Transverse colon (tissue), 4 donors: ENCODE measurements at regions of chr12 and their contacts with region 1.

Region 1: GRCh38 chr12:111396726-111397445 is 8.8 kb upstream of the SH2B3 start:
- DNase-seq: peak; percentile 90
- H3K4me3 ChIP-seq: peak overlapping the region in 1 of 4 donors; percentile 24
- H3K27ac ChIP-seq: peak overlapping the region; percentile 2 to 50 (median 8)
- H3K4me1 ChIP-seq: peaks cover 0 to 12% (median 4%) of the 10 kb centered on the region in 4 donors
- H3K27me3 ChIP-seq: no peaks in the 10 kb centered on the region
- CTCF ChIP-seq: peak; percentile 98 to 100 (median 99)
- EP300 ChIP-seq: no peak
- POLR2A ChIP-seq: no peak

Region 2: DNA sequence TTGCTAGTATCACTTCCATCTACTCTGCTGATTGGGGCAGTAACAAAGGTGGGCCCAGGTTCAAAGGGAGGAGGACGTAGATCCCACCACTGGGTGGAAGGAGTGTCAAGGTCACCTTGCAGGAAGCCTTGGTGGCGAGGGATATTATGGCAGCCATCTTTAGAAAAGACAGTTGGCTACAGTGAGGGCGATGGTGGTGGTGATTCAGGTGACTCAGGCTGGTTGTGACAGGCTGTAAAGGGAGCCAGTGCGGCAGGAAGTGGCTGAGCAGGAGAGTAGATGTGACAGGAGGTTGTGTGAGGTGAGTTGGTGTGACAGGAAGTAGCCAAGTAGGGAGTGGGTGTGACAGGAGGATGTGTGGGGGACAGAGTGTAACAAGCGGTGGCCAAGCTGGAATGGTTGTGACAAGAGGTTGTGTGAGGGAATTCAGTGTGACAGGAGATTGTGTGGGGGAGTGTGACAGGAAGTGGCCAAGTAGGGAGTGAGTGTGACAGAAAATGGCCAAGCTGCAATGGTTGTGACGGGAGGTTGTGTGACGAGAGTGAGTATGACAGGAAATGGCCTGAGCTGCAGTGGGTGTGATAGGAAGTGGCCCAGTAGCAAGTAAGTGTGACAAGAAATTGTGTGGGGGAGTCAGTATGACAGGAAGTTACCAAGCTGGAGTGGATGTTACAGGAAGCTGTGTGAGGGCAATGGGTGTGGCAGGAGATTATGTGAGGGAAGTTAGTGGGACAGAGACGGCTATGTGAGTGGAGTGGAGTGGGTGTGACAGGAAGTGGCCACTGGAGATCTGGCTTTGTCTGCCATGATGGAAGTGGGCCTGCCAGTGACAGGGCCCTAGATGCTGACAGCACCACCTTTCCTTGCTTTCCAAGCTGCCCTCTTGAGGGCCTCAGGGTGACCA is 340.0 kb before region 1 on chr12:
- in situ Hi-C with region 1: no loop called
- intact Hi-C with region 1: no loop called
- DNase-seq: peak; percentile 22
- H3K4me3 ChIP-seq: no peak overlapping the region
- H3K27ac ChIP-seq: no peak overlapping the region
- H3K4me1 ChIP-seq: no peaks in the 10 kb centered on the region
- H3K27me3 ChIP-seq: no peaks in the 10 kb centered on the region
- CTCF ChIP-seq: no peak
- EP300 ChIP-seq: no peak
- POLR2A ChIP-seq: no peak

Region 3: DNA sequence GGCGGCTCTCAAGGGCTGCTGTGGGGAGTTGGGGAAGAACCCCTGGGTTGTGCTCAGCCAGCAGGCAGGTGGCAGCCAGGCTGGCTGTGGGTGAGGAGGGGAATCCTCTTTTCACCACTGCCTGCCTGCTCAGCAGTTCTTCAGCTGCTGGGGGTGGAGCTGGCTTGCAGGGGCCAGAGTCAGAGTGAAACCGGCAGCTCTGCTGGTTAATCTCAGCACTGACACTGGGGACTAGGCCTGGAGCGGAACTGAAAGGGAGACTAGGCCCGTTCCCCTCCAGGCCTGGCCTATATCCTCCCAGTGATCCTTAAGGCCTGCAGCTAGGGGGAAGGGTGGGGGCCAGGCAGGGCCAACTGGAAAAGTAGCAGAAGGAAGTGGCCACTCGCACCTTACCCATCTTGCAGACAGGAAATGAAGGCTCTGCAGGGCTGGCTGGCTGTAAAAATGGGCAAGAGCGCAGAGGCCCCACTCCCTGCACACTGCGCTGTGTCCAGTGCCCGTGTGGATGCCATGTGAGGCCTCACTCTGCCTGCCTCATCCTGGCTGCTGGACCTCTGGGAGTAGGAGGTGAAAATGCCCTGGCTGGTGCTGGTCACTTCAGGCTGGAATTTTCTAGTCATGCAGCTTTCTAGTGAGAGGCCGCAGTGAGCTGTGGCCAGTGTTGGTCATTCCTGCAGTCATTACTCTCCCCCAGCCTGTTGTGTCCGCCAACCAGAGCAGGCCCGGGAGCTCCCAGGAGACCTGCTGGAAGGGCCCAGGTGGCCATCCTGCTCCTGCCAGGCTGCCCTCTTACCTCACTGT is 48.2 kb after region 1 on chr12:
- in situ Hi-C with region 1: loop called (anchors 5 kb)
- intact Hi-C with region 1: no loop called
- DNase-seq: peak; percentile 80
- H3K4me3 ChIP-seq: no peak overlapping the region
- H3K27ac ChIP-seq: peak overlapping the region; percentile 66 to 77 (median 72)
- H3K4me1 ChIP-seq: peaks cover 43 to 73% (median 54%) of the 10 kb centered on the region in 4 donors
- H3K27me3 ChIP-seq: no peaks in the 10 kb centered on the region
- CTCF ChIP-seq: peak in 1 of 5 experiments; percentile 18
- EP300 ChIP-seq: no peak
- POLR2A ChIP-seq: no peak

Region 4: DNA sequence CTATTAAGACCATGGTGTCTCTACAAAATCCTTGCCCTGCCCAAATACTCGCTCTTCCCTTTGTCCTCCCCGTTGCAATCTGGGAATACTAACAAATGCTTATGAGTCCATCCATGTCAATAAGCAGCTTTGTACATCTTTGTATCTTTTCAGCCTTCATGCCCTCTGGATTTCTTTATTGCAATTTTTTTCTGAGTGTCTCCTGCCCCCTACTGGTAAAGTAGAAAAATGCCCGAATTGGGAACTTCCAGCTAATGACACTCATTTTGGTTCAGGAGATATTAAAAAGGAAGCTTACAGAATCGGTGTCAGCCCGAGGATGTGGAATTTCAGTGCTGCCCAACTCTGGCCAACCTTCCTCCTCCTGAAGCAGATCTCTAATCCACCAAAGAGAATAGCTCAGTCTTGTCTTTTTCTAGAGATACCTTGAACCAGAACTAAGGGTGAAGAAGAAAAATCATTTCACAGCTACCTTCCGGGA is 54.8 kb after region 1 on chr12:
- in situ Hi-C with region 1: loop called (anchors 5 kb)
- intact Hi-C with region 1: loop called (anchors 2 kb)
- DNase-seq: no peak
- H3K4me3 ChIP-seq: no peak overlapping the region
- H3K27ac ChIP-seq: no peak overlapping the region
- H3K4me1 ChIP-seq: peaks cover 6 to 10% (median 7%) of the 10 kb centered on the region in 4 donors
- H3K27me3 ChIP-seq: no peaks in the 10 kb centered on the region
- CTCF ChIP-seq: peak; percentile 78 to 90 (median 81)
- EP300 ChIP-seq: no peak
- POLR2A ChIP-seq: no peak

Region 5: GRCh38 chr12:111482462-111482861 is 85.6 kb after region 1 on chr12:
- in situ Hi-C with region 1: no loop called
- intact Hi-C with region 1: no loop called
- DNase-seq: no peak
- H3K4me3 ChIP-seq: no peak overlapping the region
- H3K27ac ChIP-seq: no peak overlapping the region
- H3K4me1 ChIP-seq: no peaks in the 10 kb centered on the region
- H3K27me3 ChIP-seq: no peaks in the 10 kb centered on the region
- CTCF ChIP-seq: no peak
- EP300 ChIP-seq: no peak
- POLR2A ChIP-seq: no peak

Region 6: GRCh38 chr12:111529424-111530368 is 132.8 kb after region 1 on chr12:
- in situ Hi-C with region 1: loop called in 1 of 4 experiments (anchors 25 kb)
- intact Hi-C with region 1: loop called (anchors 10 kb)
- DNase-seq: peak; percentile 41
- H3K4me3 ChIP-seq: no peak overlapping the region
- H3K27ac ChIP-seq: no peak overlapping the region
- H3K4me1 ChIP-seq: no peaks in the 10 kb centered on the region
- H3K27me3 ChIP-seq: no peaks in the 10 kb centered on the region
- CTCF ChIP-seq: peak; percentile 39 to 57 (median 54)
- EP300 ChIP-seq: no peak
- POLR2A ChIP-seq: no peak

Region 7: DNA sequence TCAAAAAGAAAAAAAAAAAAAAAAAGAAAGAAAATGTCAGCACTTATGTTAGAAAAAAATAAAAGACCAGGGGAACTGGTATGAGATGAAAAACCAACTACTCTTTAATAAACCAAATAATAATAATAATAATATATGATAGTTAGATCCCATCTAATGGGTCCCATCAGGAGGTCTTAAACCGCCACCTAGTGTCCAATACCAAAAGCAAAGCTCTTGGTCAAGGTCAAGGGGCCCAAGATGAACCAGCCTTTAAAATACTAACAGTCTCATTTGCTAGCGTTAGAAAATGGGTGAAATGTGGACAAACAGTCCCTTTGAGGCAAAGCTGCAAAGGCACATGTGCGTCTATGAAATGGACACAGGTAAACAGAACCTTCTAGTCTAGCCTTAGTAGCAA is 276.6 kb after region 1 on chr12:
- in situ Hi-C with region 1: loop called in 1 of 4 experiments (anchors 25 kb)
- intact Hi-C with region 1: no loop called
- DNase-seq: no peak
- H3K4me3 ChIP-seq: no peak overlapping the region
- H3K27ac ChIP-seq: peak overlapping the region in 1 of 4 donors; percentile 30
- H3K4me1 ChIP-seq: no peaks in the 10 kb centered on the region
- H3K27me3 ChIP-seq: no peaks in the 10 kb centered on the region
- CTCF ChIP-seq: peak in 4 of 5 experiments; percentile 9 to 28 (median 16)
- EP300 ChIP-seq: no peak
- POLR2A ChIP-seq: no peak